ENCODE measurements at regions of chr5 and their contacts with region 1.

Region 1: GRCh38 chr5:172162323-172162986 is 25.6 kb downstream of the STK10 start:
- DNase-seq: no peak
- H3K4me3 ChIP-seq: no peak overlapping the region
- H3K27ac ChIP-seq: no peak overlapping the region
- H3K4me1 ChIP-seq: peaks cover 0 to 13% (median 6%) of the 10 kb centered on the region in 4 experiments
- H3K27me3 ChIP-seq: no peaks in the 10 kb centered on the region

Region 2: GRCh38 chr5:172150514-172151425 is 11.7 kb before region 1 on chr5:
- CTCF ChIA-PET with region 1: interaction called, 32 read pairs
- POLR2A ChIA-PET with region 1: no interaction called
- DNase-seq: peak; percentile 72 to 93 (median 89)
- H3K4me3 ChIP-seq: peak overlapping the region in 3 of 7 experiments; percentile 13 to 44 (median 27)
- H3K27ac ChIP-seq: peak overlapping the region in 1 of 2 experiments; percentile 55
- H3K4me1 ChIP-seq: peaks cover 0 to 57% (median 34%) of the 10 kb centered on the region in 4 experiments
- H3K27me3 ChIP-seq: no peaks in the 10 kb centered on the region

Region 3: GRCh38 chr5:172173831-172174153 is 11.3 kb after region 1 on chr5:
- CTCF ChIA-PET with region 1: interaction called, 15 read pairs
- POLR2A ChIA-PET with region 1: no interaction called
- DNase-seq: peak; percentile 67 to 76 (median 75)
- H3K4me3 ChIP-seq: peak overlapping the region in 2 of 7 experiments; percentile 31 to 71
- H3K27ac ChIP-seq: peak overlapping the region in 1 of 2 experiments; percentile 68
- H3K4me1 ChIP-seq: peaks cover 19 to 89% (median 86%) of the 10 kb centered on the region in 4 experiments
- H3K27me3 ChIP-seq: no peaks in the 10 kb centered on the region

Region 4: DNA sequence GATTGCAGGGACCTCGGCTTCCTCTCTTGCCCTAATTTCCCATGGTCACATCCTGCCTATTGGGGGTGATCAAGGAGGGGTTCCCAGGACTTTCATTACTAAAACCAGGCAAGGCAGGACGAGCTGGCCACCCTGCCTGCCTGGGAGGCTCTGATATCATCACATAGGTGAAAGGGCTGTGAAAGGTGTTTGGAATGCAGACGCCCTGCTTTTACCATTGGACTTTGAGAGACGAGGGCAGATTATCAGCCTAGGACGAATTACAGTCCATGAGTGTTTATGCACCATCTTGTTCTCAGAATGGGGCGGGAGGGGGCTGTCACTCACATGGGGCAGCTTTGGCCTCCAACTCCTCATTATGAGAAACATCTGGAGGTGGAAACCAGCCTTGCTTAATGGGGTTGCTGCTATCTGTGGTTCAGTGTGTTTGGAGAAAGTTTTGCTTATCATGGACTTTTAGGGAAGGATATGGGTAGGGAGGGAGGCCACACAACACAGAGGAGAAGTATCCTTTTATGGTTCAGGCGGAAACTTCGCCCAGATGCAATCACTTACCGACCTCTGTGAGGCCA is 190.9 kb after region 1 on chr5:
- CTCF ChIA-PET with region 1: no interaction called
- POLR2A ChIA-PET with region 1: no interaction called
- DNase-seq: no peak
- H3K4me3 ChIP-seq: no peak overlapping the region
- H3K27ac ChIP-seq: no peak overlapping the region
- H3K4me1 ChIP-seq: no peaks in the 10 kb centered on the region
- H3K27me3 ChIP-seq: no peaks in the 10 kb centered on the region

Measured in common myeloid progenitor, CD34-positive (primary cell).